Mammary epithelial cell (primary cell): ENCODE measurements at regions of chr9 and their contacts with region 1.

Region 1: GRCh38 chr9:93231121-93231694 is 47.3 kb downstream of the WNK2 start:
- DNase-seq: peak; percentile 32
- H3K4me3 ChIP-seq: no peak overlapping the region
- H3K27ac ChIP-seq: no peak overlapping the region
- H3K4me1 ChIP-seq: no peaks in the 10 kb centered on the region
- H3K27me3 ChIP-seq: peaks cover 4% of the 10 kb centered on the region
- CTCF ChIP-seq: no peak

Region 2: DNA sequence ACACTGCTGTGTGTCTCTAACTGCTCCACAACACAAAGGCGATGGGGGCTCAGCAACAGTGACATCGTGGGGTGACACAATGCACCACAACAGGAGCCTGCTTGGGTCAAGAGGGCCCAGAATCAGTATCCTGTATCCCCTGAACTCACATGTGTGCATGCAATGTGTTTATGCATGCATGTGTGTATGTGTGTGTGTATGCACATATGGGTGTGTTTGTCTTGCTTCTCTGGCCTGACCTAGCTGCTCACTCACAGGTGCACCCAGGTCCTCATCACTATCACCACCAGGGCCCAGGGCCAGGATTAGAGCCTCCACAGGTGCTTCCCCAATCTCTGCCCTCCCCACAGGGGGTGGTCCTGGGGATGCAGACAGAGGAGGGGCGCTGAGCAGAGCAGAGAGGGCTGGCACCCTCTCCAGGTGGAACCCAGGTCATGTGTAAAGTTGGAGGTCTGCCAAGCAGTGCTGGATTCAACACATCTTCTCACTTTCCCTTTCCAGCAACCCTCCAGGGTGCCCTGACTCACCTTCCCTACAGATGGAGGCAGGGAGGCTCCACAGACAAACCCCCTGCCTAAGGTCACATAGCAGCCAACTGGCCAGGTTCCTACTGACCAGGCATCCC is 335.3 kb before region 1 on chr9:
- CTCF ChIA-PET with region 1: no interaction called
- dilution Hi-C with region 1: no loop called
- in situ Hi-C with region 1: no loop called
- intact Hi-C with region 1: no loop called
- DNase-seq: no peak
- H3K4me3 ChIP-seq: no peak overlapping the region
- H3K27ac ChIP-seq: no peak overlapping the region
- H3K4me1 ChIP-seq: no peaks in the 10 kb centered on the region
- H3K27me3 ChIP-seq: no peaks in the 10 kb centered on the region
- CTCF ChIP-seq: no peak

Region 3: DNA sequence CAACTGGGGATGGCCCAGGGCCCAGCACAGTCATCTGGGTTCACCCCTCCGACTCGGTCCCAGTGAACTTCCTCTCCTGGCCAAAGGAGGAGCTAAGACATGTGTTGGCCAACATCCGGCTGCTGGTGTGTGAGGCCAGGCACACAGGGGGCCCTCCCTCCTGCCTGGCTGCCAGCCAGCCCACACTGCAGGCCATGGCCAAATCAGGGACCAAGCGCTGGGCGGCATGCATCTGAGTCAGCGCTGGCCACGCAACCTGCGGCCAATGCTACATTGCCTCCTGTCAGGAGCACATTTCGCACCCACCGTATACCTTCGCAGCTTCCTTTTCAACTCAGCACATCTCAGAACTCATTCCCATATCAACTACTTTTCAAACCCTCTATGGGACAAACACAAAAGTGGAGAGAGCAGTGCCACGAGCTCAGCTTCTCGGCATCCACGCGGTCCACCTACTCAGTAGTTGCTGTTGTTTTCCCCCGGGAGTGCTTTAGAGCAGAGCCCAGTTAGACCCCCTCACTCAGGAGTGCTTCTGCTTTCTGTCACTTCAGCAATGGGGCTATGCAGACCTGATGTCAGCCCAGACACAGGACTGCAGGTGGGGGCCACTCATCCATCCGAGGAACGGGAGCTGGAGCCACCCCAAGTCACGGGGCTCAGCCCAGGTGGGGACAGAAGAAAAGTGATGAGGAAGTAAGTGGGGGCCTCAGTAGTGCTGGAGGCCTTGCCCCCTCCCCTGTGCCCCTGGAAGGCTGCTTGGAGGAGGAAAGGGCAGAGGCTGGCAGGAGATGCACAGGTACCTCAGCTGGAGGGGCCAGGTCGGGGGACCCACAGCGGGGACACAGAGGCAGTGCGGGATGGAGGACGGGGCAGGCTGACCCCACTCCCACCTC is 111.0 kb before region 1 on chr9:
- CTCF ChIA-PET with region 1: no interaction called
- dilution Hi-C with region 1: no loop called
- in situ Hi-C with region 1: no loop called
- intact Hi-C with region 1: no loop called
- DNase-seq: peak; percentile 92
- H3K4me3 ChIP-seq: no peak overlapping the region
- H3K27ac ChIP-seq: peak overlapping the region; percentile 17
- H3K4me1 ChIP-seq: peaks cover 15% of the 10 kb centered on the region
- H3K27me3 ChIP-seq: no peaks in the 10 kb centered on the region
- CTCF ChIP-seq: peak; percentile 13 to 57

Region 4: DNA sequence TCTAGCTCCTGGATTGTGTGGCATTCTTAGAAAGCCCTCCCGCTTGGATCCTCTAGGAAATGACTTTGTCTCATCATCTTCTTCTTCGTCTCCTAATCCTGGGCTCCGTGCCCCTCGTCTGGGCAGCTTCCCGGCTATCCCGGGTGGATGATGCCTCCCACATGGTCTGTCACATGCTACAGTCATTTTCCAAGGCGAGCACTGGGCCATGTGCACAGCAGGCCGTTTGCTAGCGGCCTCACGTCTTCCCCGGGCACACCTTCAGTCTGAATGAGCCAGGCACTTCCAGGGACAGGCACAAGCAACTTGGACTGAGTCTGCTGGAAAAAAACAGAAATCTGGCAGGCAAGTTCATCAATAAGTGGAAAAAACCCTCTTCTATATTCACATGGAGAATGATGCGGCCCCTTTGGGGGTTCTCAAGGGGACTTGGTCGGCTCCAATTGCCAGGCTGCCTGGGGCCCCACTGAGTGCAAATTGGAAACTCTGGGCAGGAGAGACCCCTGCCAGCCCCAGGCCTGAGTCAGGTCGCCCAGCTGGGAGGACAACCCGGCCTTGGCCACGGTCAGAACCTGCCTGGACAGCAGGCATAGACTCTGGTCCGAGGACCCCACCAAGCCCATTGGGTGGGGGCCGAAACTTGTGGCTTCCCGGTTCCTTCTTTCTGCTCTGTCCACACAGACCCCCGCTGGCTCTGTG is 58.4 kb before region 1 on chr9:
- CTCF ChIA-PET with region 1: no interaction called
- dilution Hi-C with region 1: no loop called
- in situ Hi-C with region 1: no loop called
- intact Hi-C with region 1: no loop called
- DNase-seq: no peak
- H3K4me3 ChIP-seq: no peak overlapping the region
- H3K27ac ChIP-seq: no peak overlapping the region
- H3K4me1 ChIP-seq: no peaks in the 10 kb centered on the region
- H3K27me3 ChIP-seq: no peaks in the 10 kb centered on the region
- CTCF ChIP-seq: no peak

Region 5: DNA sequence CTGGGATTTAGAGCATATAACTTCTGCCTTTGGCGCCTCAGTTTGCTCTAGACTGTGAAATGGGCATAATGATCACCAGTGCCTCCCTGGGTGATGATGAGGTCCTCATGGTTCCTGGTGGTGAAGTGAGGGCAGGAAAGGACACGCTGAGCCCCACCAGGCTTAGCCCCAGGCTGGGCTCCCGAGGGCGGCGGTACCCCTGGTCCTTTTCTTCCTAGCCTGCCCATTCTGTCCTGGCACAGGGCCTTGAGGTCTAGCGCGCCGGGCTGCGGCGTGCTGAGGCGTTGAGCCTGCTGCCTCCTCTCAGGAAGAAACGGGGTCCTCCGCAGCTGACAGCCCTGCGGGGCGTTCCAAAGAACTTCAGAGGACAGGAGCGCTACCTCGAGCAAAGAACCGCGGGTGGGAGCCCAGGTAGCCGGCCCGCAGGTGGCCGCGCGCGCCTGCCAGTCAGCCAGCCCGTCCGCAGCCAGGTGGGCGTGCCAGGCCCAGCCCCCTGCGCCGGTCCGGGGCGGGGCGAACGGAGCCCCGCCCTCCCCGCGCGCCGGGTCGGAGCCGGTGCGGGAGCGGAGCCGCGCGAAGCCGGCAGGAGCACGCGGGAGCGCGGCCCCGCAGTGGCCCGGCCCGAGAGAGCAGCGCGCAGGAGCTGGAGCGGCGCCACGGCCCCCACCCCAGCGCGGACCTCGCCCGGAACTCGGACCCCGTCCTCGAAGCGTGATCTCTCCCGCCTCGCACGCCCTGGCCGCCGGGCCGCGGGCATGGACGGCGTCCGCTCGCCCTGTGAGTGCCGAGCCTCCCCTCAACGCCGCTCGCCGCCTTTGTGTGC is 47.4 kb before region 1 on chr9 and contains the start of gene WNK2:
- CTCF ChIA-PET with region 1: no interaction called
- dilution Hi-C with region 1: loop called (anchors 5 kb)
- in situ Hi-C with region 1: no loop called
- intact Hi-C with region 1: no loop called
- DNase-seq: no peak
- H3K4me3 ChIP-seq: peak within 1 kb of the TSS in 2 of 3 experiments; percentile 30 to 50
- H3K27ac ChIP-seq: no peak within 1 kb of the TSS
- H3K4me1 ChIP-seq: peaks cover 7% of the 10 kb centered on the region
- H3K27me3 ChIP-seq: peaks cover 24% of the 10 kb centered on the region
- CTCF ChIP-seq: no peak
- total RNA-seq, gene WNK2: 0.49 to 12.8 TPM

Region 6: DNA sequence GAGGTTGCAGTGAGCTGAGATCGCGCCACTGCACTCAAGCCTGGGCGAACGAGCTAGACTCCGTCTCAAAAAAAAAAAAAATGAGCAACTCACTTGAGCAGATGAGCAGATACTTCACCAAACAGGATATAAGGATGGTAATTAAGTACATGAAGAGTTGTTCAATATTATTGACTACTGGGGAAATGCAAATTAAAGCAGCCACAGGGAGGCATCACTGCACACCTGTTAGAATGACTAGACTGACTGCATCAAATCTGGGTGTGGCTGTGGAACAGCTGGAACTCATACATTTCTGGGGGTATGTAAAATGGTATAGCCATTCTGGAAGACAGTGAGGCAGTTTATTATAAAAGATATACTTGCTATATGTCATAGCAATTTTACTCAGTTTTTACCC is 45.8 kb after region 1 on chr9:
- CTCF ChIA-PET with region 1: no interaction called
- dilution Hi-C with region 1: no loop called
- in situ Hi-C with region 1: no loop called
- intact Hi-C with region 1: no loop called
- DNase-seq: no peak
- H3K4me3 ChIP-seq: no peak overlapping the region
- H3K27ac ChIP-seq: no peak overlapping the region
- H3K4me1 ChIP-seq: peaks cover 12% of the 10 kb centered on the region
- H3K27me3 ChIP-seq: no peaks in the 10 kb centered on the region
- CTCF ChIP-seq: peak; percentile 2 to 20